ENCODE measurements at regions of chr12 and their contacts with region 1.

Region 1: GRCh38 chr12:27573972-27574371 is 50.0 kb downstream of the PPFIBP1 start:
- DNase-seq: no peak
- H3K4me3 ChIP-seq: no peak overlapping the region
- H3K27ac ChIP-seq: peak overlapping the region; percentile 28
- H3K4me1 ChIP-seq: peaks cover 92% of the 10 kb centered on the region
- H3K27me3 ChIP-seq: no peaks in the 10 kb centered on the region
- CTCF ChIP-seq: no peak

Region 2: GRCh38 chr12:27449026-27449425 is 124.9 kb before region 1 on chr12:
- intact Hi-C with region 1: no loop called
- DNase-seq: no peak
- H3K4me3 ChIP-seq: no peak overlapping the region
- H3K27ac ChIP-seq: no peak overlapping the region
- H3K4me1 ChIP-seq: peaks cover 14% of the 10 kb centered on the region
- H3K27me3 ChIP-seq: no peaks in the 10 kb centered on the region
- CTCF ChIP-seq: no peak

Region 3: DNA sequence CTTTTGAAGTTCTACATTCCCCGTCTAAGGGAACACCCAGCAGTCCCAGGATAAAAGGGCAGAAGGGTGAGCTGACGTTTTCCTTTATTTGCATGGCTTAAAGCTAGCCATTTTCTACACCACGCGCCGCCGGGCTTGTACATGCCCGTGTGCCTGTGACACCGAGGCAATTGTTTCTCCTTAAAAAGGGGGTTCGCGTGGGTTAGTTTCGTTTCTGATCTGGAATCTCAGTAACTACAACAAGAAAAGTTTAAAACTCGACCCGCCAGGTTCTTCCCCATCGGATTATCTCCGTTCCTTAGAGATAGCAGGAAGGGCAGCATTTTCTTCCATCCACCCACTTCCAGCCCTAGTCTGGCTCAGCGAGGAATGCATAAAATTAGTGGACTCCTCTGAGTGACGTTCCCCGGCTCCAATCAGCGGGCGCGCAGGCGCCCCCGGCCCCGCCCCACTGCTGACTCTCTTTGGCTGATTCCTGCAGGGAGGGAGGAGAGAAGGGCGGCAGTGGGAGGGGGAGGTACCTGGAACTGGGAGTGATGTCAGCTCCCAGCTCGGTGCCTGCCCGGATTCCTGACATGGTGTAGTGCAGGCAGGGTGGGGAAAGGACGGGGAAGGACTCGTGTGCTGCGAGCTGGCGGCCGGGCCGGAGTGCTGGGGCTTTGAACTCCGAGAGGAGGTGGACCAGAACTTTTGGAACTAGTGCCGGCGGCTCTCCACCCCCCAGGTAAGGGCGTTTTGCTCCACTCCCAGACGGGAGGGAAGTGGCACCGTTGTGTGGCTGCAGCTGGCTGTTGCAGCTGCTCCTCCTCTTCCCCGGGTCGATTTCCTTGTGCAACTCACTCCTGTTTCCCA is 50.1 kb before region 1 on chr12 and contains the start of gene PPFIBP1:
- intact Hi-C with region 1: loop called (anchors 10 kb)
- DNase-seq: peak; percentile 99
- H3K4me3 ChIP-seq: peak within 1 kb of the TSS; percentile 82
- H3K27ac ChIP-seq: peak within 1 kb of the TSS; percentile 96
- H3K4me1 ChIP-seq: peaks cover 73% of the 10 kb centered on the region
- H3K27me3 ChIP-seq: no peaks in the 10 kb centered on the region
- CTCF ChIP-seq: peak; percentile 49
- total RNA-seq, gene PPFIBP1: 258 TPM

Measured in left ventricle myocardium inferior (tissue), 1 donor.